Esophagus muscularis mucosa (tissue), 4 donors: ENCODE measurements at regions of chr15 and their contacts with region 1.

Region 1: DNA sequence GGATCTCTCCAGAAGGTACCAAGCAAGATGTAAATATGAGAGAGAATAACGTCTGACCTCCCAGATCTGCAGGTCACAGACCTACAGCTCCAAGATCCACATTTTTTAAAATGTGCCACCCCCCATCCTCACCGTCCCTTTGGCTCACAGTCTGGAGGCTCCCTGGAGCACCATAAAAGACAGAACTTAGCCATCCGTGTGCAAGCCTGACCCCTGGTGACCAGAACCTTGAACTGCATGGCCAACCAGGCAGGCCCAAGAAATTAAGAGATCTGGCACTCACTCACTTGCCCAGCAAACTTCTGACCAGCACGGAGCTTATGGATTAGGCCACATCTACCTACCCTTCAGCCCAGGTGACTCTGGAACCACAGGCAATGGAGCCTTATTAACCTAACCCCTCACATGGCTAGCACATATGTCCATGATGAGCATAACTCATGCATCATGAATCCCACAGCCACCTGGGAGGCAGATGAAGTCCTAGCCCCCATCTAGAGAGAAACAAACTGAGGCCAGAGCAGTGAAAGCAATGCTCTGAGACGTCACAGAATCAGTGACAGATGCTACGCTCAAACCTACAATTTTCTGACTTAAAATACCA is 275.3 kb downstream of the UACA start:
- DNase-seq: no peak
- H3K4me3 ChIP-seq: no peak overlapping the region
- H3K27ac ChIP-seq: no peak overlapping the region
- H3K4me1 ChIP-seq: peaks cover 0 to 23% (median 6%) of the 10 kb centered on the region in 4 donors
- H3K27me3 ChIP-seq: no peaks in the 10 kb centered on the region
- CTCF ChIP-seq: peak; percentile 94 to 99 (median 96)
- EP300 ChIP-seq: no peak
- POLR2A ChIP-seq: no peak

Region 2: GRCh38 chr15:69475769-69476358 is 1012.2 kb before region 1 on chr15:
- intact Hi-C with region 1: loop called (anchors 2 kb)
- DNase-seq: no peak
- H3K4me3 ChIP-seq: no peak overlapping the region
- H3K27ac ChIP-seq: no peak overlapping the region
- H3K4me1 ChIP-seq: peaks cover 0 to 10% (median 3%) of the 10 kb centered on the region in 4 donors
- H3K27me3 ChIP-seq: peaks cover 0 to 3% (median 0%) of the 10 kb centered on the region in 4 donors
- CTCF ChIP-seq: peak; percentile 86 to 94 (median 91)
- EP300 ChIP-seq: no peak
- POLR2A ChIP-seq: no peak

Region 3: GRCh38 chr15:69576035-69576526 is 912.0 kb before region 1 on chr15:
- intact Hi-C with region 1: loop called (anchors 2 kb)
- DNase-seq: no peak
- H3K4me3 ChIP-seq: no peak overlapping the region
- H3K27ac ChIP-seq: no peak overlapping the region
- H3K4me1 ChIP-seq: peaks cover 0 to 7% (median 3%) of the 10 kb centered on the region in 4 donors
- H3K27me3 ChIP-seq: peaks cover 0 to 5% (median 0%) of the 10 kb centered on the region in 4 donors
- CTCF ChIP-seq: peak; percentile 56 to 61 (median 60)
- EP300 ChIP-seq: no peak
- POLR2A ChIP-seq: no peak

Region 4: GRCh38 chr15:69734688-69735087 is 753.4 kb before region 1 on chr15:
- intact Hi-C with region 1: loop called (anchors 5 kb)
- DNase-seq: no peak
- H3K4me3 ChIP-seq: no peak overlapping the region
- H3K27ac ChIP-seq: peak overlapping the region in 1 of 4 donors; percentile 17
- H3K4me1 ChIP-seq: peaks cover 0 to 19% (median 17%) of the 10 kb centered on the region in 4 donors
- H3K27me3 ChIP-seq: no peaks in the 10 kb centered on the region
- CTCF ChIP-seq: no peak
- EP300 ChIP-seq: no peak
- POLR2A ChIP-seq: no peak

Region 5: DNA sequence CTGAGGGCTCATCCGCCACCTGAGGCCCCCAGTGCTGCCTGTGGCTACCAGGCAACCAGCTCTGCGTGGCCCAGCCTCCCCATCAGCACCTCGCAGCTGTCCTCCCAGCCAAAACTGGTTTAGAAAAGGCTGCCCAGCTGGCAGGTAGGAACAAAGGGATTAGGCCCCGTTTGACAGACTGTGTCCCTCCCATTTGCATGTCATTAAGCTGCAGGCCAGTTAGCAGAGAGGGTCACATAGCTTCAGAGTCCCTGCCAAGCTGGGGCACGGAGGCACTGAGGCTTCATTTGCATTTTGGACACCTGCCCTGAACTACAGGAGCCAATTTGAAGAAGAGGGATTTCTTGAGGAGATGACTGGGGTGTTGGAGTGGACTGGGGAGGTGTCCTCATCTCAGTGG is 568.3 kb before region 1 on chr15:
- intact Hi-C with region 1: no loop called
- DNase-seq: no peak
- H3K4me3 ChIP-seq: no peak overlapping the region
- H3K27ac ChIP-seq: no peak overlapping the region
- H3K4me1 ChIP-seq: no peaks in the 10 kb centered on the region
- H3K27me3 ChIP-seq: peaks cover 0 to 3% (median 0%) of the 10 kb centered on the region in 4 donors
- CTCF ChIP-seq: no peak
- EP300 ChIP-seq: no peak
- POLR2A ChIP-seq: no peak

Region 6: GRCh38 chr15:70339681-70340493 is 148.2 kb before region 1 on chr15:
- intact Hi-C with region 1: no loop called
- DNase-seq: peak; percentile 81
- H3K4me3 ChIP-seq: no peak overlapping the region
- H3K27ac ChIP-seq: peak overlapping the region in 2 of 4 donors; percentile 12 to 63
- H3K4me1 ChIP-seq: peaks cover 0 to 39% (median 27%) of the 10 kb centered on the region in 4 donors
- H3K27me3 ChIP-seq: no peaks in the 10 kb centered on the region
- CTCF ChIP-seq: no peak
- EP300 ChIP-seq: no peak
- POLR2A ChIP-seq: no peak